Activated CD4-positive, alpha-beta memory T cell treated with anti-CD3 and anti-CD28 coated beads, Interleukin-2, amount 10 ng/mL, durations not matched to agents 7 days and 5 days (primary cell): ENCODE measurements at regions of chr13 and their contacts with region 1.

Region 1: GRCh38 chr13:41668130-41668757 is 210.9 kb downstream of the RGCC start:
- DNase-seq: peak; percentile 51
- H3K4me3 Mint-ChIP-seq: no peak overlapping the region
- H3K27ac Mint-ChIP-seq: no peak overlapping the region
- H3K4me1 Mint-ChIP-seq: peaks cover 1% of the 10 kb centered on the region
- H3K27me3 Mint-ChIP-seq: no peaks in the 10 kb centered on the region

Region 2: DNA sequence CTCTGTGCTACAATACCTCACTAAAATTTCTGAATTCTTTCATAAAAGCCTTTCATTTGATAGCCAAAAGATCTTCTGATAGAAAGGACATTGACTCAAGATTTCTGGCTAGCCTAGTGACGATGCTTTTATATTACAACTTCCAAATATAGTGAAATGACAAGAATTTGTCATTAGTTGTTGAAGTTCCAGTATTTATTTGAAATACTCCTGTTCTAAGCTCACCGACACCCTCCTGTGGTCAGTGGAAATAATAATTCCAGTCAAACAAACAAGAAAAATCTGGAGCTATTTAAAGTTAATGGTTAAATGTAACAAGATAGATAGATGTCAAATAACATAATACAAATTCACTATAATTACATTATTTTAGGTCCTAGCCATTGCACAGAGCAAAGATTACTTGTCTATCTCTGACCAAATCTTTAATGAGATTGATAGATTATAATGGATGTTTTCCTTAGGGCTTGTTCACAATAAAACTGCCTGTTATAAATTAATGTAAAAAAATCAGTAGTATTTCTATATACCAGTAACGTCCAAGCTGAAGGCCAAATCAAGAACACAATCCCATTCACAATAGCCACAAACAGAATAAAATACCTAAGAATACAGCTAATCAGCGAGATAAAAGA is 15.4 kb before region 1 on chr13:
- CTCF ChIA-PET with region 1: interaction called, 13 read pairs
- POLR2A ChIA-PET with region 1: no interaction called
- DNase-seq: peak; percentile 35
- H3K4me3 Mint-ChIP-seq: no peak overlapping the region
- H3K27ac Mint-ChIP-seq: no peak overlapping the region
- H3K4me1 Mint-ChIP-seq: peaks cover 7% of the 10 kb centered on the region
- H3K27me3 Mint-ChIP-seq: no peaks in the 10 kb centered on the region

Region 3: DNA sequence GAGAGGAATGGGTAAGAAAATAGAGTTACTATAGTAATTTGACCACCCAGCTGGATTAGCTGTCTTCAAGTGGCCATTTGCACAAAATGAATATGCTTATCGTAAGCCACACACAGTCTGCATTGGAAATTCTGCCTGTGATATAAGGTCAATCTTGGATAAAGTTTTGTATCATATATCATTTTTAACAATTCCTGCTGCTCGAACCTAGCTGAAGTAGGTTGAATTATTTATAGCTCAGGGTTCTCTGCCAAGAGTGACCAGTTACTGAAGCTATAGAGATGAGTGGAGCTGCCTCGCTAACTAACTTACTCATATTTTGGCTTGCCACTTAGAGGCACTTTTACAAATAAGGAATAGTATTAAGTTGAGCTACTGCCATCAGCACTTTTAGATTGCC is 10.0 kb after region 1 on chr13:
- CTCF ChIA-PET with region 1: interaction called, 11 read pairs
- POLR2A ChIA-PET with region 1: no interaction called
- DNase-seq: no peak
- H3K4me3 Mint-ChIP-seq: no peak overlapping the region
- H3K27ac Mint-ChIP-seq: no peak overlapping the region
- H3K4me1 Mint-ChIP-seq: no peaks in the 10 kb centered on the region
- H3K27me3 Mint-ChIP-seq: no peaks in the 10 kb centered on the region

Region 4: GRCh38 chr13:41694545-41695301 is 26.5 kb after region 1 on chr13:
- CTCF ChIA-PET with region 1: no interaction called
- POLR2A ChIA-PET with region 1: no interaction called
- DNase-seq: no peak
- H3K4me3 Mint-ChIP-seq: no peak overlapping the region
- H3K27ac Mint-ChIP-seq: no peak overlapping the region
- H3K4me1 Mint-ChIP-seq: no peaks in the 10 kb centered on the region
- H3K27me3 Mint-ChIP-seq: no peaks in the 10 kb centered on the region

Region 5: DNA sequence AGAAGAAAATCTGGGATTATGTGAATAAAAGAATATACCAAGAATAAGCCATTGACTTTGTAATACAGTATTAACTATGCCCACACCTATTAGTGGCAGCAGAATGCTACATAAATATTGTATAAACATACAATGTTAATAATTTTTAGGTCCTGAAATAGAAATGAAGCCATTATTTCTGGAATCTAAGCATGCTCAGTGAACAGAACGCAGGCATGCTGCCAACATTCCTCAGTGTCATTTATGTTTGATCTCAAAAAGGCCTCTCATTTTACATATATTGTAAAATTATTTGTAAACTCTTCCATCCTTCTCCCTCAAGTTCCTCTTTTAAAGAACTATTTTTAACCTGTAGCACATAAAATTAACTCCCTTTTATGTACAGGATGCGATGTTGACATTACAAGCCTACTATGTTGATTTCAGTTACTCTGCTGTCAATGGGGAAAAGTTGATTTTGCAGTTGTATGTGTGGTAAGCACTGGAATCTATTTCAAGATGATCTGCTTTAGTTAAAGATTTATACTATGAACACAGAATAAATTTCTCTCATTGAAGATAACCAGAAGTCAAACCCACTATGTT is 173.9 kb after region 1 on chr13:
- CTCF ChIA-PET with region 1: no interaction called
- POLR2A ChIA-PET with region 1: no interaction called
- DNase-seq: no peak
- H3K4me3 Mint-ChIP-seq: no peak overlapping the region
- H3K27ac Mint-ChIP-seq: no peak overlapping the region
- H3K4me1 Mint-ChIP-seq: peaks cover 2% of the 10 kb centered on the region
- H3K27me3 Mint-ChIP-seq: no peaks in the 10 kb centered on the region

Region 6: GRCh38 chr13:42110410-42111155 is 442.3 kb after region 1 on chr13:
- CTCF ChIA-PET with region 1: interaction called, 65 read pairs
- POLR2A ChIA-PET with region 1: no interaction called
- DNase-seq: peak; percentile 24
- H3K4me3 Mint-ChIP-seq: no peak overlapping the region
- H3K27ac Mint-ChIP-seq: no peak overlapping the region
- H3K4me1 Mint-ChIP-seq: peaks cover 3% of the 10 kb centered on the region
- H3K27me3 Mint-ChIP-seq: no peaks in the 10 kb centered on the region